ENCODE measurements at regions of chr20 and their contacts with region 1.

Region 1: GRCh38 chr20:1466211-1467081 is at the start of gene NSFL1C:
- DNase-seq: peak; percentile 95 to 100 (median 98)
- ATAC-seq: peak; percentile 98
- H3K4me3 ChIP-seq: peak within 1 kb of the TSS; percentile 59
- H3K4me3 Mint-ChIP-seq: peak within 1 kb of the TSS; percentile 81 to 90 (median 86)
- H3K27ac ChIP-seq: peak within 1 kb of the TSS; percentile 82
- H3K27ac Mint-ChIP-seq: peak within 1 kb of the TSS; percentile 35 to 90 (median 79)
- H3K4me1 ChIP-seq: peaks cover 19 to 29% of the 10 kb centered on the region in 2 donors
- H3K4me1 Mint-ChIP-seq: peaks cover 42 to 61% (median 48%) of the 10 kb centered on the region in 7 donors
- H3K27me3 ChIP-seq: no peaks in the 10 kb centered on the region
- H3K27me3 Mint-ChIP-seq: peaks cover 0 to 21% (median 6%) of the 10 kb centered on the region in 5 donors
- total RNA-seq, gene NSFL1C: 59.3 to 80.0 (median 64.7) TPM

Region 2: DNA sequence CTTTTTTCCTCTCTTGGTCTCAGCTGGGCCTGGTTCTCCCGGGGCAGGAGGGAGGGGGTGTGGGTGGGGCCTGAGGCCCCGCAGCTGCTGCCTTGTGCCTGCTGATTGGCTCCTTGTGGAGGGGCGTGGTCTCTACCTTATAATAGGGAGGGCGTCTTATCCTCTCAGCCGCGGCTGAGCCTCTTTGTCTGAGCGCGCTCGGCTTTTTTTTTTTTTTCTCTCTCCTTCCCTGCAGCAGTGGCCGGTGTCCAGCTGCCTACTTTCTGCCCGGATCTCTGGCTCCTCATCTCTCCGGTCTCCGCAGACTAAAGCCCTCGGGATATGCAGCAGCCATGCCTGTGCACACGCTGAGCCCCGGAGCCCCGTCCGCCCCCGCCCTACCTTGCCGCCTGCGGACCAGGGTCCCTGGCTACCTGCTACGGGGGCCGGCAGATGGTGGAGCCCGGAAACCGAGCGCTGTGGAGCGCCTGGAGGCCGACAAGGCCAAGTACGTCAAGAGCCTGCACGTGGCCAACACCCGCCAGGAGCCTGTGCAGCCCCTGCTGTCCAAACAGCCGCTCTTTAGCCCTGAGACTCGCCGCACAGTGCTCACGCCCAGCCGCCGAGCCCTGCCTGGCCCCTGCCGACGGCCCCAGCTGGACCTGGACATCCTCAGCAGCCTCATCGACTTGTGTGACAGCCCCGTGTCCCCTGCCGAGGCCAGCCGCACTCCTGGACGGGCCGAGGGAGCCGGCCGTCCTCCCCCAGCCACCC is 621.8 kb before region 1 on chr20:
- CTCF ChIA-PET with region 1: no interaction called
- POLR2A ChIA-PET with region 1: no interaction called
- intact Hi-C with region 1: loop called in 1 of 2 experiments (anchors 5 kb)
- DNase-seq: peak; percentile 55 to 95 (median 83)
- ATAC-seq: peak; percentile 98
- H3K4me3 ChIP-seq: peak overlapping the region; percentile 75
- H3K4me3 Mint-ChIP-seq: peak overlapping the region; percentile 88 to 97 (median 94)
- H3K27ac ChIP-seq: peak overlapping the region; percentile 70
- H3K27ac Mint-ChIP-seq: peak overlapping the region in 8 of 9 donors; percentile 70 to 93 (median 86)
- H3K4me1 ChIP-seq: peaks cover 40 to 45% of the 10 kb centered on the region in 2 donors
- H3K4me1 Mint-ChIP-seq: peaks cover 30 to 58% (median 52%) of the 10 kb centered on the region in 7 donors
- H3K27me3 ChIP-seq: no peaks in the 10 kb centered on the region
- H3K27me3 Mint-ChIP-seq: no peaks in the 10 kb centered on the region

Region 3: GRCh38 chr20:1266167-1266973 is 200.1 kb before region 1 on chr20 and contains the start of gene SNPH:
- CTCF ChIA-PET with region 1: no interaction called
- POLR2A ChIA-PET with region 1: no interaction called
- intact Hi-C with region 1: loop called in 1 of 2 experiments (anchors 1 kb)
- DNase-seq: peak; percentile 41 to 79 (median 67)
- ATAC-seq: peak; percentile 93
- H3K4me3 ChIP-seq: peak within 1 kb of the TSS; percentile 66
- H3K4me3 Mint-ChIP-seq: peak within 1 kb of the TSS; percentile 79 to 99 (median 93)
- H3K27ac ChIP-seq: peak within 1 kb of the TSS; percentile 88
- H3K27ac Mint-ChIP-seq: peak within 1 kb of the TSS; percentile 77 to 100 (median 98)
- H3K4me1 ChIP-seq: peaks cover 9 to 54% of the 10 kb centered on the region in 2 donors
- H3K4me1 Mint-ChIP-seq: peaks cover 22 to 87% (median 81%) of the 10 kb centered on the region in 7 donors
- H3K27me3 ChIP-seq: no peaks in the 10 kb centered on the region
- H3K27me3 Mint-ChIP-seq: peaks cover 0 to 5% (median 0%) of the 10 kb centered on the region in 5 donors
- total RNA-seq, gene SNPH: 7.3 to 43.4 (median 22.5) TPM

Region 4: GRCh38 chr20:1392823-1393506 is 73.5 kb before region 1 on chr20 and contains the start of gene FKBP1A:
- CTCF ChIA-PET with region 1: no interaction called
- POLR2A ChIA-PET with region 1: interaction called, 5 read pairs
- intact Hi-C with region 1: loop called (anchors 1 kb)
- DNase-seq: peak; percentile 80 to 92 (median 89)
- ATAC-seq: peak; percentile 96
- H3K4me3 ChIP-seq: peak within 1 kb of the TSS; percentile 74
- H3K4me3 Mint-ChIP-seq: peak within 1 kb of the TSS; percentile 79 to 98 (median 94)
- H3K27ac ChIP-seq: peak within 1 kb of the TSS; percentile 82
- H3K27ac Mint-ChIP-seq: peak within 1 kb of the TSS; percentile 91 to 99 (median 96)
- H3K4me1 ChIP-seq: peaks cover 39 to 44% of the 10 kb centered on the region in 2 donors
- H3K4me1 Mint-ChIP-seq: peaks cover 45 to 82% (median 75%) of the 10 kb centered on the region in 7 donors
- H3K27me3 ChIP-seq: no peaks in the 10 kb centered on the region
- H3K27me3 Mint-ChIP-seq: peaks cover 0 to 30% (median 0%) of the 10 kb centered on the region in 5 donors
- total RNA-seq, gene FKBP1A: 74.5 to 253 (median 93.1) TPM

Region 5: DNA sequence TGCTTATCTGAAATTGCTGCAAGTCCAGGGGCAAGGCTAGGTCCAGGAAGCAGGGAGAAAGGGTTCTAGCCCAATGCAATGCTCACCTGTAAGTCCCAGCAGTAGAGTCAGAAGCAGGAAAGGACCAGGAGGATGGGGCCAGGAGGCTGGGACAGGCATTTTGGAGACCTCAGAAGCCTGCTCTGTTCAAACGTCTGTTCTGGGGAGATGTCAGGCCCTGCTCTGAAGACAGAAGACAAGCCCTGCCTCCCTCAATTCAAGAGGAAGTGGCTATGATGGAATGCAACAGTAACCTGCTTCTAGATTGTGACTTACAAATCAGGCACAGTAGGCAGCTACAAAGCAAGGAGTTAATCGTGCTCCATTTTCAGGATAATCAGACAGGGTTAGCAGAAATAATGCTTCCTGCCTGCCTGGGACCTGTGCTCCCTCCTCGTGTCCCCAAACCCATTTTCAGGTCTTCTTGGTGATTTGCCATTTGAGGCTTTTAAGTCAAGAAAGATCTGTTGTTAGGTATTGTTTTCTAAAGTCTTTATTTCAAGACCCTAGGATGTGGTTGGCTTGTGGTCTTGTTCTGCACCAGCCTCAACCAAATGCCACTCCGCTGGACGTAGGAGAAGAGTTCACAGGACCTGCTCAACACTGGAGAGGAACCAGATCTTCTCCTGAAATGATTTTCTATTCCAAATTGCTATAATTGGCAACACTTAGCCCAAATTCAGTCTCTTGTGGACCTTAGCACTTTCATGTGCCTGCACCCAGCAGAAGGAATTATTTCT is 191.3 kb after region 1 on chr20 and contains the start of gene SIRPG:
- CTCF ChIA-PET with region 1: no interaction called
- POLR2A ChIA-PET with region 1: no interaction called
- intact Hi-C with region 1: loop called in 1 of 2 experiments (anchors 5 kb)
- DNase-seq: peak in 6 of 9 donors; percentile 42 to 56 (median 48)
- ATAC-seq: peak; percentile 70
- H3K4me3 ChIP-seq: peak within 1 kb of the TSS; percentile 85
- H3K4me3 Mint-ChIP-seq: peak within 1 kb of the TSS; percentile 93 to 97 (median 96)
- H3K27ac ChIP-seq: peak within 1 kb of the TSS; percentile 87
- H3K27ac Mint-ChIP-seq: peak within 1 kb of the TSS; percentile 86 to 99 (median 95)
- H3K4me1 ChIP-seq: peaks cover 79 to 81% of the 10 kb centered on the region in 2 donors
- H3K4me1 Mint-ChIP-seq: peaks cover 46 to 95% (median 90%) of the 10 kb centered on the region in 7 donors
- H3K27me3 ChIP-seq: no peaks in the 10 kb centered on the region
- H3K27me3 Mint-ChIP-seq: no peaks in the 10 kb centered on the region
- total RNA-seq, gene SIRPG: 25.6 to 71.7 (median 50.2) TPM

Region 6: GRCh38 chr20:1776681-1777475 is 310.4 kb after region 1 on chr20:
- CTCF ChIA-PET with region 1: no interaction called
- POLR2A ChIA-PET with region 1: no interaction called
- intact Hi-C with region 1: loop called (anchors 1 to 2 kb)
- DNase-seq: peak; percentile 58 to 86 (median 74)
- ATAC-seq: peak; percentile 95
- H3K4me3 ChIP-seq: peak overlapping the region; percentile 77
- H3K4me3 Mint-ChIP-seq: peak overlapping the region; percentile 68 to 94 (median 85)
- H3K27ac ChIP-seq: peak overlapping the region; percentile 50
- H3K27ac Mint-ChIP-seq: peak overlapping the region in 5 of 9 donors; percentile 9 to 66 (median 62)
- H3K4me1 ChIP-seq: no peaks in the 10 kb centered on the region
- H3K4me1 Mint-ChIP-seq: peaks cover 12 to 17% (median 16%) of the 10 kb centered on the region in 7 donors
- H3K27me3 ChIP-seq: no peaks in the 10 kb centered on the region
- H3K27me3 Mint-ChIP-seq: peaks cover 7 to 11% (median 8%) of the 10 kb centered on the region in 5 donors

Measured in naive thymus-derived CD4-positive, alpha-beta T cell (primary cell).